ENCODE measurements at regions of chr9 and their contacts with region 1.

Region 1: GRCh38 chr9:20074291-20074690 is 285.5 kb upstream of the SLC24A2 start:
- DNase-seq: no peak
- ATAC-seq: no peak
- H3K4me3 ChIP-seq: no peak overlapping the region
- H3K4me3 Mint-ChIP-seq: no peak overlapping the region
- H3K27ac ChIP-seq: no peak overlapping the region
- H3K27ac Mint-ChIP-seq: no peak overlapping the region
- H3K4me1 ChIP-seq: no peaks in the 10 kb centered on the region
- H3K4me1 Mint-ChIP-seq: no peaks in the 10 kb centered on the region
- H3K27me3 ChIP-seq: no peaks in the 10 kb centered on the region
- H3K27me3 Mint-ChIP-seq: no peaks in the 10 kb centered on the region
- CTCF ChIP-seq: no peak

Region 2: GRCh38 chr9:19999491-20000057 is 74.7 kb before region 1 on chr9:
- CTCF ChIA-PET with region 1: no interaction called
- POLR2A ChIA-PET with region 1: no interaction called
- intact Hi-C with region 1: no loop called
- DNase-seq: peak in 2 of 9 experiments; percentile 13 to 44
- ATAC-seq: peak; percentile 72
- H3K4me3 ChIP-seq: no peak overlapping the region
- H3K4me3 Mint-ChIP-seq: no peak overlapping the region
- H3K27ac ChIP-seq: no peak overlapping the region
- H3K27ac Mint-ChIP-seq: peak overlapping the region; percentile 60
- H3K4me1 ChIP-seq: peaks cover 7% of the 10 kb centered on the region
- H3K4me1 Mint-ChIP-seq: peaks cover 15% of the 10 kb centered on the region
- H3K27me3 ChIP-seq: no peaks in the 10 kb centered on the region
- H3K27me3 Mint-ChIP-seq: no peaks in the 10 kb centered on the region
- CTCF ChIP-seq: no peak

Region 3: DNA sequence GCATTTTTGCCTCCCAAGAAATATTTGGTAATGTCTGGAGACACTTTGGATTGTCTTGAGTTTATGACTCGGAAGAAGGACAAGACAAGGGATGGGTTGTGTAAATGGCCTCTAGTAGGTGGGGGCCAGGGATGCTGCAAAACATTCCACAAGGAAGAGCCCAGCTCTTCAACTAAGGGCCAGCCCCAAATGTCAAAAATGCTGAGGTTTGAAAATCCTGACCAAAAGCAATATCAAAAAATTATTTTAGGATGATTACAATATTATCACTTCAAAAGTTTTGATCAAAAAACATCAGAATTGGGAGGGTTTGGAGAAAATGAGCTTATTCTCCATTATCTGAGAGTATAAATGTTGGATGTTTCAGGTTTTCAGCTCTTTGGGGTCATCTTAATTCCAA is 36.6 kb before region 1 on chr9:
- CTCF ChIA-PET with region 1: no interaction called
- POLR2A ChIA-PET with region 1: no interaction called
- intact Hi-C with region 1: loop called in 1 of 2 experiments (anchors 1 kb)
- DNase-seq: no peak
- ATAC-seq: no peak
- H3K4me3 ChIP-seq: no peak overlapping the region
- H3K4me3 Mint-ChIP-seq: no peak overlapping the region
- H3K27ac ChIP-seq: no peak overlapping the region
- H3K27ac Mint-ChIP-seq: no peak overlapping the region
- H3K4me1 ChIP-seq: peaks cover 13% of the 10 kb centered on the region
- H3K4me1 Mint-ChIP-seq: peaks cover 12% of the 10 kb centered on the region
- H3K27me3 ChIP-seq: no peaks in the 10 kb centered on the region
- H3K27me3 Mint-ChIP-seq: no peaks in the 10 kb centered on the region
- CTCF ChIP-seq: no peak

Measured in CD8-positive, alpha-beta T cell (primary cell).